ENCODE measurements at regions of chr3 and their contacts with region 1.

Region 1: DNA sequence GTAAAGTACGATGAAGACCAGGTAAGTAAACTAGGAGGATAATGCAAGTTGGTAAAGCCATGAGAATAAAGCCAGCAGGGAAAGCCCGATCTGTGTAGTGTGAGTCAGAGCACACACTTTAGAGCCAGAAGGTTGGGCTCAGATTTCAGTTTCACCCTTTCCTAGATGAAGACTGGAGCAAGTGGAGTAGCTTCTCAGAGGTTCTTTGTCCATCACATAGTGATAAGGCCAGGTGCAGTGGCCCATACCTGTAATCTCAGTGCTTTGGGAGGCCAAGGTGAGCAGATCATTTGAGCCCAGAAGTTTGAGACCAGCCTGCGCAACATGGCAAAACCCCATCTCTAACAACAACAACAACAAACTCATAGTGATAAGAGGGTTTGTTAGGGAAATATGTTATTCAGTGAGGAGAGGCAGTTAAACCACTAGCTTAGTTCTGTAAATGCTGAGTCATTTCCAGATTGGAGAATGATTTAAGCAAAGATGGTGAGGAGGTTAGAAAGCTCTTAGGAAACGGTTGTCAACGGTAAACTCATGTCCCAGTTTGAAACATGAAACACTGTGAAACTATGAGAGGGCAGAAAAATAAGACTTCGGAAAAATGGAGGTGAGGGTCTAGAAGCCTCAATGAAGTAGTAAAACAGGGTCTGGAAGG is 39.0 kb downstream of the IL12A start:
- DNase-seq: peak in 1 of 2 experiments; percentile 23
- ATAC-seq: peak; percentile 44 to 63; a peak in 3 of 6 replicates
- H3K4me3 ChIP-seq: no peak overlapping the region
- H3K27ac ChIP-seq: peak overlapping the region; percentile 48 to 72; a peak in 5 of 6 replicates
- H3K4me1 ChIP-seq: peaks cover 19% of the 10 kb centered on the region
- CTCF ChIP-seq: no peak
- EP300 ChIP-seq: no peak
- POLR2A ChIP-seq: no peak
- RAD21 ChIP-seq: no peak

Region 2: DNA sequence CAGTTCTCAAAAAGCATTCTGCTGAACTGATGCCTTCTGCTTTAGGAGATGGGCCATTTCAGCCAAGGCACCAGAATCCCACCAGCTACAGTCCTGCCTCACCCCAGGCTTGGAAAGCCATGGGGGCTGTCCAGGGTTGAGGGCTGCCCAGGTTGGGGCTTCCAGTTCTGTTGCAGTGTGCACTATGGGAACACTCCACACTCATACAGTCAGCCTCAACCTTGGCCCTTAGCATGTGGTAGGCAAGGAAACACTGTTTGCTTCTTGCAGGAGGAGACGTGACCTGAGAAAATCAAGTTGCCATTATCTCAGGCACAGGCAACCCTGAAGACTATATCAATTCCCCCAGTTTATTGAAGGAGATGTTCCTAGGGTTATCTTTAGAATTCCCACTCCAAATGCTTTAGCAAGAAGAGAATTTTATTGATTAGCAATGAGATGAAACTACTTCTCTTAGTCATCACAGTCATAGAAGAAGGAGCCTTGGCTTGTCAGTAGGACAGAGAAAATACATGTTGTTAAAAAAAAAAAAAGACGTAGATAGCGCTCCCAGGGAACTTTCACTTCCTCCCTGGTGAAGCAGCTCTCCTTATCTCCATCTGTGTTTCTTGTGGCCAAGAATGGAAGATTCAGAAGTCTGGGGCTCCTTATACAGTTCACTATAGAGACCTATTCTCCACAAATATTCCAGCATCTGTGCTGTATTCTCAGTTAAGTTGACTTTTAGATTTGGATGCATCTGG is 77.3 kb before region 1 on chr3:
- CTCF ChIA-PET with region 1: no interaction called
- POLR2A ChIA-PET with region 1: no interaction called
- DNase-seq: no peak
- ATAC-seq: no peak
- H3K4me3 ChIP-seq: no peak overlapping the region
- H3K27ac ChIP-seq: no peak overlapping the region
- H3K4me1 ChIP-seq: 0 out of 3 replicates have a peak, but pooled peaks cover 3% of the 10 kb centered on the region
- CTCF ChIP-seq: no peak
- EP300 ChIP-seq: no peak
- POLR2A ChIP-seq: no peak
- RAD21 ChIP-seq: no peak

Region 3: DNA sequence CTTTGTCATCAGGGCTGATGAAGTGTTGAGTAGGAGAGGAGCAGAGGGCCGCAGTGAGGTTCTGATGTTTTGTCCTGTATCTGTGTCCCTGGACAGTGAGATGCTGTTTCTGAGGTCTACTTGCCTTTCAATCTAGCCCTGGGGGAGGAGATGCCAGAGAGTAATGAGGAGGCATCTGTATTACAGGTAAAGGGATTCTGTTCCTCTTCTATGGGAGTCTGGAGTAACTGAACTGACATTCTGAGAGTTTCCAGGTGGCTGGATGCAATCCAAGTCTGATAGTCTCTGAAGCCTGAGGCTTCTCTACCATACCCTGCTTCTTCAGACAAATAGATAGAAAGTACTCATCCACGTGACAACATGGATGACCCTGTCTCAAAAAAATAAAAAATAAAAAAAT is 21.9 kb after region 1 on chr3:
- CTCF ChIA-PET with region 1: interaction called, 32 read pairs
- POLR2A ChIA-PET with region 1: no interaction called
- DNase-seq: no peak
- ATAC-seq: peak in 1 of 2 experiments; percentile 33; a peak in 1 of 6 replicates
- H3K4me3 ChIP-seq: no peak overlapping the region
- H3K27ac ChIP-seq: no peak overlapping the region
- H3K4me1 ChIP-seq: no peaks in the 10 kb centered on the region
- CTCF ChIP-seq: no peak
- EP300 ChIP-seq: no peak
- POLR2A ChIP-seq: no peak
- RAD21 ChIP-seq: no peak

Region 4: GRCh38 chr3:160163229-160163878 is 135.7 kb after region 1 on chr3:
- CTCF ChIA-PET with region 1: interaction called, 18 read pairs
- POLR2A ChIA-PET with region 1: no interaction called
- DNase-seq: peak; percentile 26 to 36
- ATAC-seq: peak; percentile 54 to 83; a peak in 3 of 6 replicates
- H3K4me3 ChIP-seq: no peak overlapping the region
- H3K27ac ChIP-seq: peak overlapping the region; percentile 28 to 58; a peak in 3 of 6 replicates
- H3K4me1 ChIP-seq: peaks cover 4% of the 10 kb centered on the region
- CTCF ChIP-seq: peak; percentile 73
- EP300 ChIP-seq: no peak
- POLR2A ChIP-seq: no peak
- RAD21 ChIP-seq: peak; percentile 76 to 84

Region 5: DNA sequence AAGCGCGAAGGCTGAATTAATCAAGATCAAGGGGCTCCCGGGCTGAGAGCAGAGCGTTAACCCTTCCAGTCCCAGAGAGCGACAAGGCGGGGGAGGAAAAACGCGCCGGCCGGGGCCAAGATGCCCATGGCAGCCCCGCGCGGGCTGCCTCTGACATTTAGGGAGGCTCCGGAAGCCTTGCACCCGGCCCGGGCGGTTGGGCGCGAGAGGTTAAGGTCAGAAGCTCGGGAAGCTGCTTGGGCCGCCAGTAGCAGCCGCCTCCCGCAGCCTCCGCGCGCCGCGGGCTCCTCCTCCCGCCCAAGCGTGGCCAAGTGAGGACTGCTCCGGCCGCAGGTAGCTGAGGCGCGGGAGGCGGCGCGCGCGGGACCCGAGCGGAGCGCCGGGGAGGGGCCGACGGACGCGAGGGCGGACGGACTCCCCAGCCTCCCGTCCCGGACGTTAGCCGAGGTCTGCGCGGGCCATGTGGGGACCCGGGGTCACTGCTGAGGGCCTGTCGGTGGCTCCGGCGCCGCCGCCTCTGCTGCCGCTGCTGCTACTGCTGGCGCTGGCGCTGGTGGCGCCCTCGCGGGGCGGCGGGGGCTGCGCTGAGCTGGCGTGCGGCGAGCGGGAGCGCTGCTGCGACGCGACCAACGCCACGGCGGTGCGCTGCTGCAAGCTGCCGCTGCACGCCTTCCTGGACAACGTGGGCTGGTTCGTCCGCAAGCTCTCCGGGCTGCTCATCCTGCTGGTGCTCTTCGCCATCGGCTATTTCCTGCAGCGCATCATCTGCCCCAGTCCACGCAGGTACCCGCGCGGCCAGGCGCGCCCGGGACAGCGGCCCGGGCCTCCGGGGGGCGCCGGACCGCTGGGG is 197.7 kb after region 1 on chr3 and contains the start of gene C3orf80:
- CTCF ChIA-PET with region 1: interaction called, 14 read pairs
- POLR2A ChIA-PET with region 1: interaction called, 9 read pairs
- DNase-seq: peak; percentile 49 to 66
- ATAC-seq: peak; percentile 93
- H3K4me3 ChIP-seq: peak within 1 kb of the TSS; percentile 57
- H3K27ac ChIP-seq: peak within 1 kb of the TSS; percentile 74 to 89
- H3K4me1 ChIP-seq: no peaks in the 10 kb centered on the region
- CTCF ChIP-seq: peak; percentile 58
- EP300 ChIP-seq: no peak
- POLR2A ChIP-seq: peak; percentile 44
- RAD21 ChIP-seq: peak in 1 of 2 experiments; percentile 56; a peak in 3 of 5 replicates
- polyA plus RNA-seq, gene C3orf80: 1.7 TPM in 2 replicates

Region 6: GRCh38 chr3:160343132-160343531 is 315.5 kb after region 1 on chr3:
- CTCF ChIA-PET with region 1: interaction called, 20 read pairs
- POLR2A ChIA-PET with region 1: no interaction called
- DNase-seq: peak in 1 of 2 experiments; percentile 19
- ATAC-seq: no peak
- H3K4me3 ChIP-seq: no peak overlapping the region
- H3K27ac ChIP-seq: no peak overlapping the region; a peak in 1 of 6 replicates
- H3K4me1 ChIP-seq: no peaks in the 10 kb centered on the region
- CTCF ChIP-seq: peak; percentile 71
- EP300 ChIP-seq: no peak
- POLR2A ChIP-seq: no peak
- RAD21 ChIP-seq: peak; percentile 66 to 81